A549 (cell line): ENCODE measurements at regions of chr6 and their contacts with region 1.

Region 1: DNA sequence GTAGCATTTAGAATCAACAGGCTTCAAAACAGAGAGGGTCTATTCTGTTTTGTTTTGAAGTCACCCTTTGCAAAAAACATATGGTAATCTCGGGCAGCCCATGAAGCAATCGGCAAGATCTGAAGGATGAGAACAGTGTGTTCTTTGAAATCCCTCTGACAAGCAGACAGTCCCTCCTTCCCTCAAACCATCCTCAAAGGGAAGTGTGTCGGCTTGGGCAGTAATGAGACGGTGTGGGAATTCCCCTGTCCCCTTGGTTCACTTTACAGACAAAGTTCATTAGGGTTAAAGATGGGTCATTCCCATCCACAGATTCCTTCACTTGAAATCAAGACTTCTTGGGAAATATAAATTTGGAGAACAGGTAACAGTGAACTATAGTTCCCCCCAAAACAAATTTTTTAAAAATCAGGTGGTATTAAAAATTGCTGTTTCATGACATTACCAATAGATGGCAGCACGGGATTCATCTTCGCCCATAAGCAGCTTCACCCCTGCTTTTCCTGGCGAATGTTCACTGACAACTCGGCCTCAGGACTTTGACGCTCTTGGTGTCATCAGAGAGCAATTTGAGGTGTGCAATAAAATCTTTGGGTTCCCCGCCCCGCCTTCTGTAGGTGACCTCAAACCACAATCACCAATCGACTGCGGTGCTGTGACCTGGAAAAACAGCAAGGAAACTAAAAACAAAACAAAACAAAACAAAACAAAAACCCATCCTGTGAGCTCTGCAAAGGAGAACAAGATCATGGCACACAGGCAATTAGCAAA is 159.3 kb upstream of the TNFAIP3 start:
- DNase-seq: peak; percentile 23 to 79
- ATAC-seq: peak; percentile 62 to 68
- H3K4me3 ChIP-seq: no peak overlapping the region
- H3K27ac ChIP-seq: peak overlapping the region; percentile 65; a peak in 4 of 6 replicates
- H3K4me1 ChIP-seq: peaks cover 5% of the 10 kb centered on the region; the same call in 2 of the 3 replicates
- CTCF ChIP-seq: peak; percentile 72
- EP300 ChIP-seq: no peak
- POLR2A ChIP-seq: no peak
- RAD21 ChIP-seq: peak; percentile 80 to 87

Region 2: GRCh38 chr6:137683916-137684315 is 23.9 kb before region 1 on chr6:
- CTCF ChIA-PET with region 1: no interaction called
- POLR2A ChIA-PET with region 1: no interaction called
- DNase-seq: no peak
- ATAC-seq: no peak
- H3K4me3 ChIP-seq: no peak overlapping the region
- H3K27ac ChIP-seq: peak overlapping the region in 1 of 2 experiments; percentile 13; a peak in 1 of 6 replicates
- H3K4me1 ChIP-seq: peaks cover 33% of the 10 kb centered on the region
- CTCF ChIP-seq: no peak
- EP300 ChIP-seq: no peak
- POLR2A ChIP-seq: no peak
- RAD21 ChIP-seq: no peak

Region 3: DNA sequence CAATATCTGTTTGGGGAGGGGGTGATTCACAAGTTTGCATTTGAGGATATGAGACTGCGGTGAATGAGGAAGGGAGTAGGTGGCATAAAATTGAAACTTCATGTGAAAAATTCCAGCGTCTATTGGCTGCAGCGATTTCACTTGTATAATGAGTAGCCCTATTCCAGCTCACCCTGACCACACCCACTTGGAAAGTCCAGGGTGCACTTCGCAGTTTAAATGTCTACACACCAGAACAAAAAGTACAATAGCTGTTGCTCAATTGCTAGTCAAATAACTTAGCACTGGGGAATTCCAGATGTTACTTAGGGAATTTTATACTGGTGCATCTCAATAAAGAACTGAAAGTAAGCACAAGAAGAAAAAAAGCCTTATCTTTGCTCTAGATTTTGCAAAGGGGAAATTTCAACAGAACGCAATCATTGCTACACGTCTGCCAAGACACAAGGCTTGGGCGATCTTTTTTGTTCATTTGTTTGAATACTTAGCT is 165.5 kb after region 1 on chr6:
- CTCF ChIA-PET with region 1: interaction called, 37 read pairs
- POLR2A ChIA-PET with region 1: no interaction called
- DNase-seq: peak; percentile 72 to 82
- ATAC-seq: peak; percentile 93 to 96
- H3K4me3 ChIP-seq: peak overlapping the region; percentile 21; the same call in 1 of the 3 replicates
- H3K27ac ChIP-seq: peak overlapping the region; percentile 74 to 78
- H3K4me1 ChIP-seq: peaks cover 26% of the 10 kb centered on the region
- CTCF ChIP-seq: no peak
- EP300 ChIP-seq: no peak
- POLR2A ChIP-seq: no peak
- RAD21 ChIP-seq: no peak

Region 4: GRCh38 chr6:137975188-137975940 is 267.6 kb after region 1 on chr6:
- CTCF ChIA-PET with region 1: interaction called, 11 read pairs
- POLR2A ChIA-PET with region 1: no interaction called
- DNase-seq: no peak
- ATAC-seq: no peak
- H3K4me3 ChIP-seq: no peak overlapping the region
- H3K27ac ChIP-seq: no peak overlapping the region
- H3K4me1 ChIP-seq: no peaks in the 10 kb centered on the region
- CTCF ChIP-seq: peak; percentile 35; the same call in 2 of the 3 replicates
- EP300 ChIP-seq: no peak
- POLR2A ChIP-seq: no peak
- RAD21 ChIP-seq: peak; percentile 49 to 57; a peak in 4 of 5 replicates